ENCODE measurements at regions of chr18 and their contacts with region 1.

Region 1: DNA sequence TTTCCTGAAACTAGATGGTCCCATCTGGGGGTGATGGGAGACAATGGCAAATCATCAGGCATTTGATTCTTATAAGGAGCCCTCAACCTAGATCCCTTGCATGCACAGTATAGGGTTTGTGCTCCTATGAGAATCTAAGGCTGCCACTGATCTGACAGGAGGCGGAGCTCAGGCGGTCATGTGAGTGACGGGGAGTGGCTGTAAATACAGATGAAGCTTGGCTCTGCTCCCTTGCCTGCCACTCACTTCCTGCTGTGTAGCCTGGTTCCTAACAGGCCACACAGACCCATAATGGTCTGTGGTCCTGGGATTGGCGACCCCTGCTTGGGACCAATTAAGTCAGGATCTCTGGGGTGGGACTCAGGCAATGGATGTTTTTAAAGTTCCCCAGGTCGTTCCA is 293.4 kb downstream of the ZNF521 start:
- DNase-seq: no peak
- H3K4me3 ChIP-seq: no peak overlapping the region
- H3K27ac ChIP-seq: no peak overlapping the region
- H3K4me1 ChIP-seq: no peaks in the 10 kb centered on the region
- H3K27me3 ChIP-seq: no peaks in the 10 kb centered on the region
- CTCF ChIP-seq: no peak

Region 2: GRCh38 chr18:24894880-24895279 is 163.6 kb before region 1 on chr18:
- intact Hi-C with region 1: loop called (anchors 5 kb)
- DNase-seq: no peak
- H3K4me3 ChIP-seq: no peak overlapping the region
- H3K27ac ChIP-seq: no peak overlapping the region
- H3K4me1 ChIP-seq: no peaks in the 10 kb centered on the region
- H3K27me3 ChIP-seq: no peaks in the 10 kb centered on the region
- CTCF ChIP-seq: no peak